ENCODE measurements at regions of chr17 and their contacts with region 1.

Region 1: GRCh38 chr17:29617125-29617480 is 5.6 kb downstream of the CORO6 start:
- DNase-seq: peak; percentile 90
- CTCF ChIP-seq: peak; percentile 92

Region 2: DNA sequence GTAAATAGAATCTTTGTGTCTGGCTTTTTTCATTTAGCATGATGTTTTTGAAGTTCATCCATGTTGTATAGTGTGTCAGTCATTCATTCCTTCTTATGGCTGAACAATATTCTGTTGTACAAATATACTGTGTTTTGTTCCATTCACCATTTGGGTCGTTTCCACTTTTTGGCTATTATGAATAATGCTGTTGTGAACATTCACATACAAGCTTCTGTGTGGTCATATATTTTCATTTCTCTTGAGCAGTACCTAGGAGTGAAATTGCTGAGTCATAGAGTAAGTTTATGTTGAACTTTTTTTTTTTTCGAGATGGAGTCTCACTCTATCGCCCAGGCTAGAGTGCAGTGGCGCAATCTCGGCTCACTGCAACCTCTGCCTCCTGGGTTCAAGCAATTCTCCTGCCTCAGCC is 259.3 kb before region 1 on chr17:
- CTCF ChIA-PET with region 1: no interaction called
- POLR2A ChIA-PET with region 1: interaction called, 10 read pairs
- DNase-seq: no peak
- CTCF ChIP-seq: no peak

Region 3: DNA sequence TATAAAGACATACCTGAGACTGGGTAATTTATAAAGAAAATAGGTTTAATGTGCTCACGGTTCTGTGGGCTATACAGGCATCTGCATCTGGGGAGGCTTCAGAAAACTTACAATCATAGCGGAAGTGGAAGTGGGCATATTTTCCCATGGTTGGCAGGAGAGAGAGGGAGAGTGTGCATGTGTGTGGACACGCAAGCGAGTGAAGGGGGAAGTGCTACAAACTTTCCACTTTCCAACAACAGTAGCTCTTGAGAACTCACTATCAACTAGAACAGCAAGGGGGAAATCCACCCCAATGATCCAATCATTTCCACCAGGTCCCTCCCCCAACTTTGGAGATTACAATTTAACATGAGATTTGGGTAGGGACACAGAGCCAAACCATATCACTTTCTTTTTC is 215.8 kb before region 1 on chr17:
- CTCF ChIA-PET with region 1: no interaction called
- POLR2A ChIA-PET with region 1: no interaction called
- DNase-seq: no peak
- CTCF ChIP-seq: no peak

Region 4: DNA sequence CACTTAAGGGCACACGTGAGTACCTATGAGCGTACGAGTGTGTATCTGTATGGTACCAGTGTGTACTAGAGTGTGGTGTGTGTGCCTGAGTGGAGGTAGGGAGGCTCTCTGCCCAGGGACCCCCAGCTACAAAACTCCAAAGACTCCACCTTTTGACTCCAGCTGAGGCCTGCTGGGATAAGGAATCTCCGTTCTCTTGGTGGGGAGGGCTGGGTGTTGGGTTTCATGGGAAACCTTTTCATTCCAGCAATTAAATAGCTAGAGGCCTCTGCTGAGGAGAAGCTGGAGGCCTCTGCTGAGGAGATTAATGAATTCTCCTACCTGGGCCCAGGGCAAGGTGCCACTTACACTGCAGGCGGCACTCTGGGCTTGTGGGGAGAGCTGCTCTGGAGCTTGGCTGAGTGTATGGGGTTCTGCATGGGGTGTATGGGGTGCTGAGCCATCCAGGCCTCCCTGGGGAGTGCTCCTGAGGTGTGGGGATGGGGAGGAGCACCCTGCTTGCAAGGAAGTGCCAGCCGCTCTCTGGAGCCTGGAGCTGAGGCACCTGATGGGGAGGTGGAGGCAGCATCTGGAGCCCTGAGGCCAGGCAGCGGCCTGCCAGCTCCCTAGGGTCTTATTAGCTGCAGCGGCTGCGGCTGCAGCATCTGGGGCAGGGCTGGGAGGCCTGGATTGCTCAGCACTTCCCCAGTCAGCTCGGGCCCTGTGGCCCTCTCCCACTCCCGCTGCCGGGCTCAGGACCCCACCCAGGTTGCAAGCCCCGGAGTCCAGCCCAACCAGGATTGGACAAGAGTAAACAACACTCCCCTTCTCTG is 19.5 kb before region 1 on chr17:
- CTCF ChIA-PET with region 1: interaction called, 80 read pairs
- POLR2A ChIA-PET with region 1: interaction called, 4 read pairs
- DNase-seq: no peak
- CTCF ChIP-seq: no peak

Region 5: GRCh38 chr17:29640413-29640812 is 23.3 kb after region 1 on chr17:
- CTCF ChIA-PET with region 1: interaction called, 22 read pairs
- POLR2A ChIA-PET with region 1: interaction called, 3 read pairs
- DNase-seq: no peak
- CTCF ChIP-seq: no peak

Region 6: GRCh38 chr17:29766796-29767327 is 149.8 kb after region 1 on chr17:
- CTCF ChIA-PET with region 1: interaction called, 11 read pairs
- POLR2A ChIA-PET with region 1: no interaction called
- DNase-seq: no peak
- CTCF ChIP-seq: no peak

Region 7: GRCh38 chr17:29931231-29931932 is 314.3 kb after region 1 on chr17:
- CTCF ChIA-PET with region 1: interaction called, 23 read pairs
- POLR2A ChIA-PET with region 1: interaction called, 3 read pairs
- DNase-seq: peak; percentile 66
- CTCF ChIP-seq: peak; percentile 76